ENCODE measurements at regions of chr2 and their contacts with region 1.

Region 1: GRCh38 chr2:61135510-61135909 is 26.5 kb upstream of the C2orf74 start:
- DNase-seq: peak; percentile 43
- H3K4me3 Mint-ChIP-seq: no peak overlapping the region
- H3K27ac Mint-ChIP-seq: no peak overlapping the region
- H3K4me1 Mint-ChIP-seq: no peaks in the 10 kb centered on the region
- H3K27me3 Mint-ChIP-seq: no peaks in the 10 kb centered on the region
- CTCF ChIP-seq: peak; percentile 48

Region 2: GRCh38 chr2:61639721-61640120 is 504.2 kb after region 1 on chr2:
- CTCF ChIA-PET with region 1: no interaction called
- POLR2A ChIA-PET with region 1: no interaction called
- intact Hi-C with region 1: loop called (anchors 5 kb)
- DNase-seq: no peak
- H3K4me3 Mint-ChIP-seq: no peak overlapping the region
- H3K27ac Mint-ChIP-seq: no peak overlapping the region
- H3K4me1 Mint-ChIP-seq: peaks cover 6% of the 10 kb centered on the region
- H3K27me3 Mint-ChIP-seq: no peaks in the 10 kb centered on the region
- CTCF ChIP-seq: no peak

Region 3: GRCh38 chr2:61658841-61659780 is 523.6 kb after region 1 on chr2:
- CTCF ChIA-PET with region 1: no interaction called
- POLR2A ChIA-PET with region 1: no interaction called
- intact Hi-C with region 1: loop called (anchors 1 kb)
- DNase-seq: peak; percentile 58
- H3K4me3 Mint-ChIP-seq: peak overlapping the region; percentile 28
- H3K27ac Mint-ChIP-seq: no peak overlapping the region
- H3K4me1 Mint-ChIP-seq: peaks cover 18% of the 10 kb centered on the region
- H3K27me3 Mint-ChIP-seq: no peaks in the 10 kb centered on the region
- CTCF ChIP-seq: peak; percentile 57

Region 4: GRCh38 chr2:61834893-61835292 is 699.4 kb after region 1 on chr2:
- CTCF ChIA-PET with region 1: no interaction called
- POLR2A ChIA-PET with region 1: no interaction called
- intact Hi-C with region 1: no loop called
- DNase-seq: peak; percentile 21
- H3K4me3 Mint-ChIP-seq: no peak overlapping the region
- H3K27ac Mint-ChIP-seq: no peak overlapping the region
- H3K4me1 Mint-ChIP-seq: no peaks in the 10 kb centered on the region
- H3K27me3 Mint-ChIP-seq: no peaks in the 10 kb centered on the region
- CTCF ChIP-seq: no peak

Region 5: DNA sequence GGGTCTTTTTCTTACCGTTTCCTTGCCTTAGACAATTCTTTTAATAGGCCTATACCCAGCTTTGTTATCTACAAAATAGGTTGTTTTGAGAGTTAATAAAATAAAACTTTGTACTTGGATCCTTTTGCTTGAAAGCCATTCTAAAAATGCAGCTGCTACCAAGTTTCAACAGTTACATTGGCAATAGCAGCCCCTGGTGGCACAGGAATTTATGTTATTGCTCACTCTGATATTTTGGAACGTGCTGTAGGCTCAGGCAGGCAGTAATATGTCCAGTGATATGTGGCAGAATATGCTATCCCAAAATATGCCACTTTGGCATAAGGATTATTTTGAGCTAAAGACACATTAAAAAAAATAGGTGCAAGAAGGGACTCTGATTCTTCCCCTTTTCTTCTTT is 763.3 kb after region 1 on chr2:
- CTCF ChIA-PET with region 1: no interaction called
- POLR2A ChIA-PET with region 1: no interaction called
- intact Hi-C with region 1: loop called (anchors 2 kb)
- DNase-seq: peak; percentile 29
- H3K4me3 Mint-ChIP-seq: no peak overlapping the region
- H3K27ac Mint-ChIP-seq: no peak overlapping the region
- H3K4me1 Mint-ChIP-seq: no peaks in the 10 kb centered on the region
- H3K27me3 Mint-ChIP-seq: no peaks in the 10 kb centered on the region
- CTCF ChIP-seq: peak; percentile 37